Head of caudate nucleus (tissue), 42 donors: ENCODE measurements at regions of chr11 and their contacts with region 1.

Region 1: DNA sequence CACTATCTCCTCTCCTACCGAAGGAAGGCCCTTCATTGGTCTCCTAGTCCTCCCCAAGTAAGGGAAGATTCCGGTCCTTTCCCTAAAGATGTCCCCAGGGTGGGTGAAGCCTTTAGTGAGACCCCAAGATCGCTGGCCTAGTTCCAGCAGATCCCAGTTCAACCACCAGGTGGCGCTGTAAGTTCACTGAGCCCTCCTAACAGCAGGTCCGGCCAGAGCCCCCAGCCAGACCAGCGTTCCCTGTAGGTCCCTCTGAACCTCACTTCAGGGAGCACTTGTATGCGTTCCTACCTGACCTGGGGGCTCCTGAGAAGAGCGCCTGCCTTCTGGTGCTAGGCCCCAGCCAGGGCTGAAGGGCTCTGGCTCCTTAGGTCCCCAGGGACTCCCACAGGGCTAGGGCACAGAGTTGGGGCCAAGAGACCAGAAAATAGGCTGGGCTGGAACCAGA is 38.1 kb downstream of the LMO1 start:
- DNase-seq: peak; percentile 37 to 94 (median 82)

Region 2: GRCh38 chr11:8263769-8264410 is 38.3 kb after region 1 on chr11 and contains the start of gene LMO1:
- intact Hi-C with region 1: loop called (anchors 5 kb)
- DNase-seq: peak; percentile 72 to 95 (median 89)

Region 3: DNA sequence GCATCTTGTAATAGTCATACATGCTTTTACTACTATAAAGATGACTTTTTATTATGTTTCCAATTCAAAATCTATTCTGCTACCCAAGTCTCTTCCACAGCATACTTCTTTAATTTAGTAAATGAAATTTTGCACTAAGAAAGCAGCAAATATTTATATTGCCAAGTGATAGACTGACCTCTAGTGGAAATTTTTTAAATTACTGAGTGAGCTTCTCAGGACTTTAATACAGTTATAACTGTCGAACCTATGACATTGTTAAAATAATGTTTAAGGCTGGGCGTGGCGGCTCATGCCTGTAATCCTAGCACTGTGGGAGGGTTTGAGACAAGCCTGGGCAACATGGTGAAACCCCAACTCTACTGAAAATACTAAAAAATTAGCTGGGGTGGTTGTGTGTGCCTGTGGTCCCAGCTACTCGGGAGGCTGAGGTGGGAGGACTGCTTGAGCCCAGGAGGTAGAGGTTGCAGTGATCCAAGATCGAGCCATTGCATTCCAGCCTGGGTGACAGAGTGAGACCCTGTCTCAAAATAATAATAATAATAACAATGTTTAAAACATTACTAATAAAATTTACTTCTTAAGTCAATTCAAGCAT is 341.1 kb after region 1 on chr11:
- intact Hi-C with region 1: loop called (anchors 2 kb)
- DNase-seq: no peak